Activated CD4-positive, alpha-beta memory T cell treated with anti-CD3 and anti-CD28 coated beads, Interleukin-2, amount 10 ng/mL, durations not matched to agents 7 days and 5 days (primary cell): ENCODE measurements at regions of chr5 and their contacts with region 1.

Region 1: GRCh38 chr5:176573564-176574296 is 24.6 kb downstream of the CDHR2 start:
- DNase-seq: peak; percentile 77
- H3K4me3 Mint-ChIP-seq: no peak overlapping the region
- H3K27ac Mint-ChIP-seq: no peak overlapping the region
- H3K4me1 Mint-ChIP-seq: peaks cover 3% of the 10 kb centered on the region
- H3K27me3 Mint-ChIP-seq: peaks cover 6% of the 10 kb centered on the region

Region 2: GRCh38 chr5:176415952-176416924 is 157.5 kb before region 1 on chr5 and contains the start of gene CLTB:
- CTCF ChIA-PET with region 1: interaction called, 15 read pairs
- POLR2A ChIA-PET with region 1: interaction called, 3 read pairs
- DNase-seq: peak; percentile 91
- H3K4me3 Mint-ChIP-seq: peak within 1 kb of the TSS; percentile 82
- H3K27ac Mint-ChIP-seq: peak within 1 kb of the TSS; percentile 71
- H3K4me1 Mint-ChIP-seq: peaks cover 39% of the 10 kb centered on the region
- H3K27me3 Mint-ChIP-seq: peaks cover 10% of the 10 kb centered on the region
- total RNA-seq, gene CLTB: 56.2 to 57.2 TPM

Region 3: DNA sequence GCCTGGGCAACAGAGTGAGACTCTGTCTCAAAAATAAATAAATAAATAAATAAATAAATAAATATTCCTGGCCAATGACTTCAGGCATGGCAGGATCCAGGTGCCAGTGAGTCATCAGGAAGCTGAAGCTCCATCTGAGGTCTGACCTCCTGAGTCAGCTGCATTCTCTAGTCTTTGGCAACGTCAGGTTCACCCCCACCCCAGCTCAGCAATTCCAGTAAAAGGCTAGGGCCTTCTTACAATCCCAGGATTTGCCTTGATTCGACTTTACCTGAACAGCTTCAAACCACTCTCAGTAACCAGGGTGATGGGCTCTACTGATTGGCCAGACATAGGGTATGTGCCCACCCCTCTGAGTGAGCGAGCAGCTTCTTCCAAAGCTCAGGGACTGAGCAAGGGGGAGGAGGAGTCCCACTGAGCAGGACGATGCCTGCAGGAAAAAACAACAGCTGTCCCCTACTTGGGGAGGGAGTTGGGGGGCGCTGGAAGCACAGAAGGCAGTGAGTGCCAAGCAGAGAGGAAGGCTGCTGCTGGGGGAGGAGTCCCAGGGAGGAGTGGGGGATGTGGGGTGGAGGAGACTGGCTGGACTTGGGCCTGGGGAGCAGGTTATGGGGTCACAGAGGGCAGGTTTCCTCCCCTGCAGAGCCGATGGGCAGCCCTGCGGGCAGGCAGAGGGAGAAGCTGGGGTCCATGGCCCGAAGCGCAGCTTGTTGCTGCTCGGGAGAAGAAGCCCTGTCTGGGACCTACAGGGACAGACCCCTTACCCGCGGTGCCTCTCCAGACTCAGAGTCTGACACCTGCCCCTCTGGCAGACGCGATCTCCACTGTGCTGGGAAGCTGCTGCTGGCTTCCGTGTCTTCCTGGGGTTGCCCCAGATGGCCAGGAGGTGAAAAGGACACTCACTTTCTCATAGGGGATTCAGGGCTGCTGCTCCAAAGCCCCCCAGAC is 210.8 kb after region 1 on chr5:
- CTCF ChIA-PET with region 1: no interaction called
- POLR2A ChIA-PET with region 1: no interaction called
- DNase-seq: no peak
- H3K4me3 Mint-ChIP-seq: no peak overlapping the region
- H3K27ac Mint-ChIP-seq: no peak overlapping the region
- H3K4me1 Mint-ChIP-seq: peaks cover 12% of the 10 kb centered on the region
- H3K27me3 Mint-ChIP-seq: peaks cover 32% of the 10 kb centered on the region